GM12878 (cell line): ENCODE measurements at regions of chr1 and their contacts with region 1.

Region 1: GRCh38 chr1:67853704-67854103 is 20.4 kb upstream of the GNG12 start:
- DNase-seq: no peak
- ATAC-seq: peak; percentile 82
- H3K4me3 ChIP-seq: no peak overlapping the region
- H3K27ac ChIP-seq: no peak overlapping the region
- H3K4me1 ChIP-seq: no peaks in the 10 kb centered on the region
- H3K27me3 ChIP-seq: no peaks in the 10 kb centered on the region
- CTCF ChIP-seq: peak; percentile 51 to 72 (median 52)
- EP300 ChIP-seq: no peak
- POLR2A ChIP-seq: no peak
- RAD21 ChIP-seq: peak; percentile 41

Region 2: GRCh38 chr1:67629370-67630075 is 224.2 kb before region 1 on chr1:
- CTCF ChIA-PET with region 1: no interaction called
- POLR2A ChIA-PET with region 1: no interaction called
- RAD21 ChIA-PET with region 1: no interaction called
- SMC1A ChIA-PET with region 1: no interaction called
- in situ Hi-C with region 1: no loop called
- intact Hi-C with region 1: no loop called
- DNase-seq: no peak
- ATAC-seq: no peak; the same call in 2 of the 3 replicates
- H3K4me3 ChIP-seq: no peak overlapping the region
- H3K27ac ChIP-seq: no peak overlapping the region
- H3K4me1 ChIP-seq: no peaks in the 10 kb centered on the region
- H3K27me3 ChIP-seq: no peaks in the 10 kb centered on the region; a peak in 1 of 4 replicates
- CTCF ChIP-seq: no peak
- EP300 ChIP-seq: no peak
- POLR2A ChIP-seq: no peak
- RAD21 ChIP-seq: no peak

Region 3: DNA sequence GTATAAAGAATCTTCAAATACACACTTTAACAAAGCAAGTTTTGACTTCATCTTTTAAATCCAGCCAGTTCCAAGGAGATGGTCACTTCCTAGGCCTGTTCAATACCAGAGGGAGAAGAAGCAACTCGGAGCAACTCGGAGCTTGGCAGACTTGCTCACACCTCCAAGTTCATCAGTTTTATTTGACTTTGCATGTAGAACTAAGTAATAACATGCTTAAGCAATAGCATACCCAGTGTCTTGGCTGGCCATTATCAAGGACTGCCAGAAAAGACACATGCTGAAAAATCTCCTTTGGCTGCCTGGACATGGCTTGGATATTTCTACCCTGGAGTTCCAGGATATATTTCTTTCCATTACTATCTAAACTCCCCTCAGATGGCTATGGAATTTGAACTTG is 73.1 kb before region 1 on chr1:
- CTCF ChIA-PET with region 1: interaction called, 12 read pairs
- POLR2A ChIA-PET with region 1: no interaction called
- RAD21 ChIA-PET with region 1: no interaction called
- SMC1A ChIA-PET with region 1: interaction called, 1,058 read pairs
- in situ Hi-C with region 1: no loop called
- intact Hi-C with region 1: no loop called
- DNase-seq: no peak
- ATAC-seq: no peak
- H3K4me3 ChIP-seq: no peak overlapping the region
- H3K27ac ChIP-seq: no peak overlapping the region
- H3K4me1 ChIP-seq: no peaks in the 10 kb centered on the region
- H3K27me3 ChIP-seq: no peaks in the 10 kb centered on the region
- CTCF ChIP-seq: no peak
- EP300 ChIP-seq: no peak
- POLR2A ChIP-seq: no peak
- RAD21 ChIP-seq: no peak

Region 4: GRCh38 chr1:67824766-67825165 is 28.9 kb before region 1 on chr1:
- CTCF ChIA-PET with region 1: interaction called, 31 read pairs
- POLR2A ChIA-PET with region 1: interaction called, 3 read pairs
- RAD21 ChIA-PET with region 1: interaction called, 4 read pairs
- SMC1A ChIA-PET with region 1: interaction called, 16 read pairs
- in situ Hi-C with region 1: no loop called
- intact Hi-C with region 1: no loop called
- DNase-seq: no peak
- ATAC-seq: no peak
- H3K4me3 ChIP-seq: no peak overlapping the region
- H3K27ac ChIP-seq: no peak overlapping the region
- H3K4me1 ChIP-seq: no peaks in the 10 kb centered on the region
- H3K27me3 ChIP-seq: peaks cover 0 to 3% of the 10 kb centered on the region in 2 experiments; a peak in 1 of 4 replicates
- CTCF ChIP-seq: no peak
- EP300 ChIP-seq: no peak
- POLR2A ChIP-seq: no peak
- RAD21 ChIP-seq: no peak

Region 5: DNA sequence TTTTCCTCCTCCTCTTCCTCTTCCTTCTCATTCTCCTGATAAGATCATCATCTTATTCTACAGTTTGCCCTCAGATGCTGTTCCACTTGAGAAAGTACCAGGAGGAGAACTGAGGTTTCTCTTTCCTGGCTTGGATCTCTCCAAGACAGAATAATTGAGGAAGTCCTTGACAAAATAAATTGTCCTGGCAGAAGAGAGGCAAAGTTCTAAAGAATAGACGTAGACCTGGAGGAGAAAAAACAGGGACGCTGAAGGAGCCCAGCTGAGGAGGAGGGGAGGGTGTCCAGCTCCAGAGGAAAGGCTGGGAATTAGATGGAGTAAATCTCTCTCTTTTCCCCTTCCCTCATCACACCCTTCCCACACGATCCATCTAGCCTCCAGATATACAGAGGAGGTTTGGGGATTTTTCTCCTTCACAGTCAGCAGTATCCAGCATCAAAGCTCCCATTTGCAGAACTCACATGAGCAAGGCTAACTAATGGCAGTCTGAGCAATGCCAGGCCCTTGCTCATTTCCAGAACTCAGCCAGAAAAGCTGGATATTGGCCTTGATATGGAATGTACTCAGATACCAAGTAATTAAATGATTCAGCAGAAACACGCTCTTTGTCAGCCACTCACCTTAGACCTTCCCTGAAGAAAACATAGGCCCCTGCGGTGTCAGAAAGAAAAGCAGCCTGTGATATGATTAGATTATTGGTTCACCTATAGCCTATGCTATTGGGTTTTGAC is 15.4 kb before region 1 on chr1:
- CTCF ChIA-PET with region 1: interaction called, 87 read pairs
- POLR2A ChIA-PET with region 1: interaction called, 5 read pairs
- RAD21 ChIA-PET with region 1: interaction called, 19 read pairs
- SMC1A ChIA-PET with region 1: interaction called, 45 read pairs
- in situ Hi-C with region 1: no loop called
- intact Hi-C with region 1: no loop called
- DNase-seq: no peak
- ATAC-seq: peak; percentile 16; the same call in 1 of the 3 replicates
- H3K4me3 ChIP-seq: no peak overlapping the region
- H3K27ac ChIP-seq: no peak overlapping the region
- H3K4me1 ChIP-seq: no peaks in the 10 kb centered on the region
- H3K27me3 ChIP-seq: peaks cover 0 to 3% of the 10 kb centered on the region in 2 experiments; a peak in 2 of 4 replicates
- CTCF ChIP-seq: no peak
- EP300 ChIP-seq: no peak
- POLR2A ChIP-seq: no peak
- RAD21 ChIP-seq: no peak

Region 6: GRCh38 chr1:67970088-67970487 is 116.4 kb after region 1 on chr1:
- CTCF ChIA-PET with region 1: no interaction called
- POLR2A ChIA-PET with region 1: no interaction called
- RAD21 ChIA-PET with region 1: no interaction called
- SMC1A ChIA-PET with region 1: no interaction called
- in situ Hi-C with region 1: no loop called
- intact Hi-C with region 1: no loop called
- DNase-seq: no peak
- ATAC-seq: no peak
- H3K4me3 ChIP-seq: no peak overlapping the region
- H3K27ac ChIP-seq: no peak overlapping the region
- H3K4me1 ChIP-seq: no peaks in the 10 kb centered on the region
- H3K27me3 ChIP-seq: no peaks in the 10 kb centered on the region
- CTCF ChIP-seq: no peak
- EP300 ChIP-seq: no peak
- POLR2A ChIP-seq: no peak
- RAD21 ChIP-seq: no peak

Region 7: GRCh38 chr1:67991546-67991945 is 137.8 kb after region 1 on chr1:
- CTCF ChIA-PET with region 1: no interaction called
- POLR2A ChIA-PET with region 1: no interaction called
- RAD21 ChIA-PET with region 1: interaction called, 3 read pairs
- SMC1A ChIA-PET with region 1: interaction called, 3 read pairs
- in situ Hi-C with region 1: no loop called
- intact Hi-C with region 1: loop called (anchors 10 kb)
- DNase-seq: no peak
- ATAC-seq: no peak
- H3K4me3 ChIP-seq: no peak overlapping the region
- H3K27ac ChIP-seq: no peak overlapping the region
- H3K4me1 ChIP-seq: no peaks in the 10 kb centered on the region
- H3K27me3 ChIP-seq: no peaks in the 10 kb centered on the region
- CTCF ChIP-seq: no peak
- EP300 ChIP-seq: no peak
- POLR2A ChIP-seq: no peak
- RAD21 ChIP-seq: no peak

Region 8: GRCh38 chr1:68111519-68112436 is 258.1 kb after region 1 on chr1:
- CTCF ChIA-PET with region 1: interaction called, 29 read pairs
- POLR2A ChIA-PET with region 1: no interaction called
- RAD21 ChIA-PET with region 1: interaction called, 17 read pairs
- SMC1A ChIA-PET with region 1: interaction called, 26 read pairs
- in situ Hi-C with region 1: no loop called
- intact Hi-C with region 1: loop called (anchors 5 kb)
- DNase-seq: no peak
- ATAC-seq: peak; percentile 75
- H3K4me3 ChIP-seq: no peak overlapping the region
- H3K27ac ChIP-seq: no peak overlapping the region
- H3K4me1 ChIP-seq: no peaks in the 10 kb centered on the region
- H3K27me3 ChIP-seq: no peaks in the 10 kb centered on the region; a peak in 1 of 4 replicates
- CTCF ChIP-seq: peak in 1 of 3 experiments; percentile 31; a peak in 2 of 6 replicates
- EP300 ChIP-seq: no peak
- POLR2A ChIP-seq: no peak
- RAD21 ChIP-seq: peak; percentile 25; the same call in 1 of the 2 replicates